ENCODE measurements at regions of chr9 and their contacts with region 1.

Region 1: DNA sequence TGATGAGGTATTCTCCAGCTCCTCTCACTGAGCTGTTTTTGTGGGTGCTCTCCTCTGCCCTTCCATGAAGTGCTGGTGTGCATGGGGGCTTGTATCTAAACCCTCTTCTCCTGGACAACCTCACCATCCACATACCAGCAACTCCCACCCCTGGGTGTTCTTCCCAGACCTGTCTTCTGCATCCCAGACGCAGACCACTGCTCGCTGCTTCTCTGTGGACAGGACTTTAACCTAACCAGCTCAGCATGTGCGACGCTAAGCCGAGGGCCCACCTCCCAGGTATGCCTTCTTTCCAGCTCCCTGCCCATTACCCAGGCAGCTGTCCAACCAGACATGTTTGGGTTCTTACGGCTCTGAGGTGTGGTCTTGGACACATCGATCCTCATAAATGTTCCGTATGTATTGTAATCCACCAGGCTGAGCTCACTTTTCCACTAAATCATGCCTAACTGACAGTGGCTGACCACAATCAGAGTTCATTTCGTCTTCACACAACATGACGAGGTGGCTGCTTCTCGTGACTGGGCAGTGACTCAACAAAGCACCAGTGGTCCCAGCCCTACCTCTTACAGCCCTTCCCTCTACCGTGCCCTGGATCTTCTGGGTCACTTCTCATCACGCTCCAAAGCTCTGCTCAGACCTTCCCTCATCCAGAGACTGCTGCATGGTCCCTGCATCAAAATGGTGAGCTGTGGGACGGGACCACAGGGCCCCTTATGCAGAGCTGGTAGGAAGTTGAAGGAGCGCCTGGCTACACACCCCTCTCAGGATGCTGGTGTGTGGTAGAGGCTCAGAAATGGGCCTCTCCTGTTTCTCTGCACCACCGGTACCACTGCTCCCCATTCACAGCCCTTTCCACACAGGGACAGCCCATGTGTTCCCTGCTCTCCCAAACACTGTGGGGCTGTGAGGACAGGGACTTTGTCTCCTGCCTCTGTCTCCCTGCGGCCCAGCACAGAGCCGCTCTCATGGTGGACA is 9.6 kb upstream of the PTGES2 start:
- DNase-seq: peak; percentile 74 to 89
- H3K4me3 ChIP-seq: no peak overlapping the region
- H3K27ac ChIP-seq: peak overlapping the region; percentile 39
- H3K4me1 ChIP-seq: peaks cover 25% of the 10 kb centered on the region
- H3K27me3 ChIP-seq: no peaks in the 10 kb centered on the region
- CTCF ChIP-seq: no peak

Region 2: GRCh38 chr9:128150594-128151308 is 13.6 kb after region 1 on chr9:
- CTCF ChIA-PET with region 1: interaction called, 3 read pairs
- POLR2A ChIA-PET with region 1: no interaction called
- intact Hi-C with region 1: loop called (anchors 1 kb)
- DNase-seq: peak; percentile 79 to 94
- H3K4me3 ChIP-seq: peak overlapping the region; percentile 97
- H3K27ac ChIP-seq: peak overlapping the region; percentile 99
- H3K4me1 ChIP-seq: peaks cover 44% of the 10 kb centered on the region
- H3K27me3 ChIP-seq: no peaks in the 10 kb centered on the region
- CTCF ChIP-seq: peak; percentile 64

Measured in PC-9 (cell line).